PC-9 (cell line): ENCODE measurements at regions of chr10 and their contacts with region 1.

Region 1: GRCh38 chr10:3943695-3944257 is 158.8 kb upstream of the KLF6 start:
- DNase-seq: no peak
- H3K4me3 ChIP-seq: no peak overlapping the region
- H3K27ac ChIP-seq: no peak overlapping the region
- H3K4me1 ChIP-seq: peaks cover 31% of the 10 kb centered on the region
- H3K27me3 ChIP-seq: no peaks in the 10 kb centered on the region
- CTCF ChIP-seq: no peak

Region 2: GRCh38 chr10:3136763-3137611 is 806.8 kb before region 1 on chr10:
- CTCF ChIA-PET with region 1: no interaction called
- POLR2A ChIA-PET with region 1: no interaction called
- intact Hi-C with region 1: no loop called
- DNase-seq: no peak
- H3K4me3 ChIP-seq: no peak overlapping the region
- H3K27ac ChIP-seq: no peak overlapping the region
- H3K4me1 ChIP-seq: no peaks in the 10 kb centered on the region
- H3K27me3 ChIP-seq: no peaks in the 10 kb centered on the region
- CTCF ChIP-seq: no peak

Region 3: DNA sequence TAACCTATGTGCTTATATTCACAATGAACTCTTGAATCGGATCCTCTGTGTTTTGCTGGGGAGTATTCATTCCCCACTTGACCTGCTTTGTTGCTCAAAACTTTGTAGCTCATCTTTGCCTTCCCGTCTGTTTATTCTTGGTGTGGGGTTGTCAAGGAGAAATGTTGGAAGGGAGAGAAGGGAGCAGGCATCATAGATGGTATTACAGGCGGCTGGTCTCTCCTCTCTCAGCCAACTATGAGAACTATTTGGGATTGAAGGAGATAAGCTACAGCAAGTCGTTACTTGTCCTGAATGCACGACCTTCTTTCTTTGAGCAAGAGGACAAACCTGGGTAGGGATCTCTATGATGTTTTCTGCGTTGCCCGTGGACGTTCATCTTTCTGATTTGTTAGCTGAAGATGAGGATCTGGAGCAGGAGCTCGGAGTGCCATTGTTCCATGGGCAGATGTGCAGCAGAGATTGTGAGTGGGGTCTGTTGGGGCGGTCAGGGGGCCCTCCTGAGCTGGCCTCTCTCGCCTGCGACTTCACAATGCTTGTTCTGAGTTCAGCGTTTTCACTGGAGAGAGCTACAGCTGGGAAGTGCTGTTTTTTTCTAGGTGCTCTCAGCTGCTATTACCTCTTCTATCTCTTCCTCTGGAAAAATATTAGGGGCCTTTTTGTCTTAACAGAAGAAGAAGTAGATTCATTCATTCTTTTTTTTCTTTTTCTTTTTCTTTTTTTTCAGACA is 31.9 kb before region 1 on chr10:
- CTCF ChIA-PET with region 1: no interaction called
- POLR2A ChIA-PET with region 1: no interaction called
- intact Hi-C with region 1: no loop called
- DNase-seq: no peak
- H3K4me3 ChIP-seq: no peak overlapping the region
- H3K27ac ChIP-seq: no peak overlapping the region
- H3K4me1 ChIP-seq: no peaks in the 10 kb centered on the region
- H3K27me3 ChIP-seq: no peaks in the 10 kb centered on the region
- CTCF ChIP-seq: no peak

Region 4: DNA sequence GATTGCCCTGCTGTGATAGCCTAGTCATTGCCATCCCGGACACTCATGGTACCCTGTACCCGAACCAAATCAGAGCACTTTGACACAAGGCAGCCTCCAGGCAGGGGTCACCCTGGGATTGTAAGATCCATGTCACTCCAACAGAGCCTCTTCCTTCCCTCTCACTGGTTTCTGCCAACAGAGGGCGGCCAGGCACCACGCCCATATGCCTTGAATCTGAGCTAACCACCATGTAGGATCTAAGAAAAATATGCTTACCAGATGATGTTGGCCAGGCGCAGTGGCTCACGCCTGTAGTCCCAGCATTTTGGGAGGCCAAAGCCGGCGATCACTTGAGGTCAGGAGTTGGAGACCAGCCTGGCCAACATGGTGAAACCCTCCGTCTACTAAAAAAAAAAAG is 230.4 kb after region 1 on chr10:
- CTCF ChIA-PET with region 1: no interaction called
- POLR2A ChIA-PET with region 1: no interaction called
- intact Hi-C with region 1: no loop called
- DNase-seq: no peak
- H3K4me3 ChIP-seq: no peak overlapping the region
- H3K27ac ChIP-seq: no peak overlapping the region
- H3K4me1 ChIP-seq: peaks cover 10% of the 10 kb centered on the region
- H3K27me3 ChIP-seq: no peaks in the 10 kb centered on the region
- CTCF ChIP-seq: no peak

Region 5: DNA sequence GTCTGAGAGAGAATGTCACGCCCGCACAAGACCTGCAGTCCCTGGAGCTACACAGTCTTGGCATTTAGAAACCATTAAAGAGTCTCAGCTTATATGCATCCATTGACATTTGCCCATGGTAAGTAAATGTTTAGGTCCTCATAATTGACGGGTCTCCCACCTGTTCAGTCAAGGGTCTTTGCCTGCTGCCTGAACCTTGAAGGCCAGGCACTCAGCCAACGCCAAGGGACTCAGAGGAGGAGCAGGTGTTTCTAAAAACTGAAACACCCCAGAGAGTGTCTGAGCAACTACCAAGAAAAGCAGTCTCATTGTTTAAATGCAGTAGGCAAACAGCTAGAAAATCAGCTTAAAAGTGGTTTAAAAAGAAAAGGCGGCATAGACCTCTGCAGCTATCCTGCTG is 617.5 kb after region 1 on chr10:
- CTCF ChIA-PET with region 1: interaction called, 12 read pairs
- POLR2A ChIA-PET with region 1: no interaction called
- intact Hi-C with region 1: no loop called
- DNase-seq: no peak
- H3K4me3 ChIP-seq: no peak overlapping the region
- H3K27ac ChIP-seq: no peak overlapping the region
- H3K4me1 ChIP-seq: no peaks in the 10 kb centered on the region
- H3K27me3 ChIP-seq: no peaks in the 10 kb centered on the region
- CTCF ChIP-seq: no peak